Mammary epithelial cell (primary cell): ENCODE measurements at regions of chr13 and their contacts with region 1.

Region 1: DNA sequence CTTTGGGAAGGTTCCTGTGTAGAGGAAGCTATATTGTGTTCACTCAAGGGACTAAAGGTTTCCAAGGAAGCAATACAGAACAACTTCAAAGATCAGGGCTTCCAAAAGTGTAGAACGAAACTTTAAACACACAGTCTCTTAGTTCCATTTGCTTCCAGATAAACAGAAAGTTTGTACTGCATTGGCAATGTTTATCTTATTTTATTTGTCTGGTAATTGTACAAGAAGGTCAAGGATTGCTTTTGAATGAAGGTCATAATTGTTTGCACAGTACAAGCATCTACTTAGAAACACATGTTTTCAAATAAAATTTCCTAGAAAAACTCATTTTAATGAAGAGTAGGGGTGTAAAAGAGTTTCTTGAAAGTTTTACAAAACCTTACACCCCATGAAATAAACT is 712.7 kb upstream of the SGCG start:
- DNase-seq: no peak
- H3K4me3 ChIP-seq: no peak overlapping the region
- H3K27ac ChIP-seq: no peak overlapping the region
- H3K4me1 ChIP-seq: no peaks in the 10 kb centered on the region
- H3K27me3 ChIP-seq: no peaks in the 10 kb centered on the region
- CTCF ChIP-seq: no peak

Region 2: DNA sequence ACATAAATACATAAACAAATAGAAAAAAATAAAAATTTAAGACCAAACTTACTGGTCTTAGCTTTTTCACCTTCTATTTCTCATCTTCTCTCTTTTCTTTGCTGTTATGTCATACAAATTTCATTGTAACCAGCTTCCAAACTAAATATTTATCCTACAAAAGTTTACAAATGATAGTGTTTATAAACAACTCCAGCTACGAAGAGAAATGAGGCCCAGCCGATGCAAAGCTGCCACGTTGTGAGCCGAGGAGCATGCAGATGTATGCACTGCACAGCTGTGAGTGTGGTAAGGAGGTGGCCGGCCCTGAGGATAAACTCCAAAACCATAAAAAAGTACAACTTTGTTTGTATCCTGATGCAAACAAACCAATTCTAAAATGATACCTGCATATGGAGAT is 70.4 kb after region 1 on chr13:
- CTCF ChIA-PET with region 1: no interaction called
- dilution Hi-C with region 1: loop called (anchors 5 kb)
- in situ Hi-C with region 1: no loop called
- intact Hi-C with region 1: no loop called
- DNase-seq: no peak
- H3K4me3 ChIP-seq: no peak overlapping the region
- H3K27ac ChIP-seq: no peak overlapping the region
- H3K4me1 ChIP-seq: no peaks in the 10 kb centered on the region
- H3K27me3 ChIP-seq: no peaks in the 10 kb centered on the region
- CTCF ChIP-seq: no peak